Activated CD4-positive, alpha-beta T cell treated with anti-CD3 and anti-CD28 coated beads, Interleukin-2, amount 10 ng/mL, durations not matched to agents 24 days and 14 days (primary cell): ENCODE measurements at regions of chr2 and their contacts with region 1.

Region 1: GRCh38 chr2:64831134-64831976 is 157.8 kb upstream of the SLC1A4 start:
- DNase-seq: peak; percentile 95
- H3K4me3 Mint-ChIP-seq: peak overlapping the region; percentile 57
- H3K27ac Mint-ChIP-seq: peak overlapping the region; percentile 85
- H3K4me1 Mint-ChIP-seq: peaks cover 28% of the 10 kb centered on the region
- H3K27me3 Mint-ChIP-seq: peaks cover 8% of the 10 kb centered on the region

Region 2: DNA sequence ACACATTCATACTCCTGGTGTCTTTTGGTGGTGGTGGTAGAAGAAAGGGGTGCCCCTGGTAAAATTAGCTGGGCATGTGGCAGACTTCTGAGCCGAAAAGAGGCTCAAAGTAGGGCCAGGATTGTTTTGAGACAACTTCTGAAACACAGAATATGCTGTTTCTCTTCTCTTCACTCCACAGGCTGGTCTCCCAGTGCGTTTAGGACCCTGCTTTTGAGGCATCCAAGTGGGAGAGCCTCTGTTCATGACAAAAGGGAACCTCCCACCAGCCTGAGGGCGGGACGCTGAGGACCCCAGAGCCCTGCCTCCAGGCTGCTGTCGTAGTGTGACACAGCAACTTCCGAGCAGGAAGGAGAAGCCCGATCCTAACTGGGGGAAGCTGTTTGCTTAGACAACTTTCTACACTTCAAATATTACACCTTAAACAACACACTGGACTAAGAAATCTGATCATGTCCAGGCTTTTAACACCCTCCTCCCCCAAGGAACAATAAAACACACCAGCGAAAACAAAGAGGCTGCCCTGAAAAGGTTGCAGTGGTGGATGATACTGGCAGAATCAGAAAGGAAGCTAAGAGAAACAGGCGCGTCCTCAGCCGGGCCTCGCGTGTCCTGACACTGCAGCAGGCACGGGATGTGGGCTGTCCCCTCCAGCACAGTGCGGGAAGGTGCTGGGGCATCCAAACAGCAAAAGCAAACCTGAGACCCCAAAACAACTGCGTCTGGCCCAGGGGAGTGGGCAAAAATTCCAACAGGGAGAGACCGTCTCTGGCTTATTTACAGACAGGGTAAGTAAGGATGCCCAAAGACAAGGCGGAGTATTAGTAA is 187.0 kb before region 1 on chr2:
- intact Hi-C with region 1: loop called (anchors 2 kb)
- DNase-seq: peak; percentile 88
- H3K4me3 Mint-ChIP-seq: peak overlapping the region; percentile 84
- H3K27ac Mint-ChIP-seq: peak overlapping the region; percentile 92
- H3K4me1 Mint-ChIP-seq: peaks cover 77% of the 10 kb centered on the region
- H3K27me3 Mint-ChIP-seq: no peaks in the 10 kb centered on the region

Region 3: DNA sequence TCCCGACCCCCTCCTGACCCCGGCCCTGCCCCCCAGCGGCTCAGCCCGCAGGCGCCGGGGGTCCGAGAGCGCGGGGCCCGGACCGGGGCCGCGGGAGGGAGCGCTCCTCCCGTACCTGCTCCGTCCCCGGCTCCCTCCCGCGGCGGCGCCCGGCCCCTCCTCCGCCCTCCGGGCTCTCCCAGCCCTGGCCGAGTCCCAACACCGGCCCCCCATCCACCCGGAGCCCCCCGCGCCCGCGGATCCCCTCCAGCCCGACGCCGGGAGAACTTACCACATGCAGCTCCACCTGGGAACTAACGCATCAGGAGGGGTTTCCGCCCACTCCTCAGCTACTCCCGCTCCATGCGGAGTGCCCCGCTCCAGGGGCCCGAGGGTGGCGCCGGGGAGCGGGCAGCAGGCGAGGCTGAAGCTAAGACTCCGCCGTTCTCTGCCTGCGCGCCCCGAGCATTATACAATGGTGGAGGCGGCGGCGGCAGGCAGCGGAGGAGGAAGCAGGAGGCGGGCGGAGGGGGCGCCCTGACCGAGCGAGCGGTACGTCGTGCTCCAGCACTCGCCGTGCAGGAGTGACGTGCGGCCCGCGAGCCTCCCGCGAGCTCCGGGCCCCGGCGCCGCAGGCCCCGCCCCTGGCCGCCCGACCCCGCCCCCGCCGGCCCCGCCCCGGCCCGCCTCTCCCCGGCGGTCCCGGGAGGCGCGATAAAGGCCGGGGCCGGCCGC is 177.8 kb before region 1 on chr2 and contains the start of gene SERTAD2:
- intact Hi-C with region 1: loop called (anchors 1 kb)
- DNase-seq: peak; percentile 96
- H3K4me3 Mint-ChIP-seq: peak within 1 kb of the TSS; percentile 95
- H3K27ac Mint-ChIP-seq: peak within 1 kb of the TSS; percentile 92
- H3K4me1 Mint-ChIP-seq: peaks cover 65% of the 10 kb centered on the region
- H3K27me3 Mint-ChIP-seq: no peaks in the 10 kb centered on the region
- total RNA-seq, gene SERTAD2: 24.6 and 26.7 TPM in 2 replicates

Region 4: GRCh38 chr2:64807417-64807816 is 23.9 kb before region 1 on chr2:
- intact Hi-C with region 1: loop called (anchors 2 kb)
- DNase-seq: peak; percentile 71
- H3K4me3 Mint-ChIP-seq: peak overlapping the region; percentile 15
- H3K27ac Mint-ChIP-seq: peak overlapping the region; percentile 59
- H3K4me1 Mint-ChIP-seq: peaks cover 27% of the 10 kb centered on the region
- H3K27me3 Mint-ChIP-seq: no peaks in the 10 kb centered on the region

Region 5: DNA sequence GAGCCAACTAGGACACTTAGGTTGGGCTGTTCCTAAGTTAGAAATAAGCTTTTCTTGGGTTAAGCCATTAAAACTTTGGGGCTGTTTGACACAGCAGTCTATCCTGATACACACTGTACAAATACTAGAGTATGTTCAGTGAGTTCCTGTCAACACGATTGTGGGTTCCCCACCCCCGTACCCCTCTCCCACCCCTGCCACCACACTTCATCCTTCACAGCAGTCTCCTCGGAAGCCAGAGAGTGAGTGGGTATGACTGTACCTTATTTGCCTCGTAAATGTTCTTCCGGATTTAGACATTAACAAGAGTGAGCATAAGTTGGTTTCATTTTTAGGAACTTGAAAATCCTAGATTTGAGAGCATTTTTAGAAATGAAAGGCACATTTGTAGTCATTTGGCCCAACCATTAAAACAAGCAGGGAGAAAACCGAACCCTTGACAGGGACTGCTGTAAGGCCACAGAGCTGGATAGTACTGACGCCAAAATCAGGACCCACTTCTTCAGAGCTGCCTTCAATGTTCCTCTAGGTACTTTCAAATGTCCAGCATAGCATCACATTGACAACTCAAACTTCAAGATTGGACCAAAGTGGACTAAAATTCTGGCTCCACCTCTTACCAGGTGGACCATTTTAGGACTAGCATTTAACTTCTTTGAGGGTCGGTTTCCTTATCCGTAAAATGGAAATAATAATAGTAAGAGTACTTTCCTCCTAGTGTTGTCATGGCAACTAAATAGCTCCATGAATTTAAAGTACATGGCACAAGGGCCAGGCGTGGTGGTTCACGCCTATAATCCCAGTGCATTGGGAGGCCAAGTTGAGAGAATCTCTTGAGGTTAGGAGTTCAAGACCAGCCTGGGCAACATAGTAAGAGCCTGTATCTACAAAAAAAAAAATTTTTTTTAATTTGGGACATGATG is 11.3 kb before region 1 on chr2:
- intact Hi-C with region 1: loop called (anchors 1 kb)
- DNase-seq: peak; percentile 82
- H3K4me3 Mint-ChIP-seq: peak overlapping the region; percentile 65
- H3K27ac Mint-ChIP-seq: peak overlapping the region; percentile 82
- H3K4me1 Mint-ChIP-seq: peaks cover 23% of the 10 kb centered on the region
- H3K27me3 Mint-ChIP-seq: no peaks in the 10 kb centered on the region

Region 6: GRCh38 chr2:64865073-64865830 is 33.9 kb after region 1 on chr2:
- intact Hi-C with region 1: loop called (anchors 1 kb)
- DNase-seq: peak; percentile 91
- H3K4me3 Mint-ChIP-seq: peak overlapping the region; percentile 73
- H3K27ac Mint-ChIP-seq: no peak overlapping the region
- H3K4me1 Mint-ChIP-seq: peaks cover 3% of the 10 kb centered on the region
- H3K27me3 Mint-ChIP-seq: peaks cover 14% of the 10 kb centered on the region